OCI-LY7 (cell line): ENCODE measurements at regions of chr19 and their contacts with region 1.

Region 1: GRCh38 chr19:48492925-48493717 is 18.5 kb downstream of the LMTK3 start:
- DNase-seq: peak; percentile 98
- H3K4me3 ChIP-seq: peak overlapping the region; percentile 63
- H3K27ac ChIP-seq: peak overlapping the region; percentile 41
- H3K4me1 ChIP-seq: peaks cover 31% of the 10 kb centered on the region
- CTCF ChIP-seq: no peak

Region 2: DNA sequence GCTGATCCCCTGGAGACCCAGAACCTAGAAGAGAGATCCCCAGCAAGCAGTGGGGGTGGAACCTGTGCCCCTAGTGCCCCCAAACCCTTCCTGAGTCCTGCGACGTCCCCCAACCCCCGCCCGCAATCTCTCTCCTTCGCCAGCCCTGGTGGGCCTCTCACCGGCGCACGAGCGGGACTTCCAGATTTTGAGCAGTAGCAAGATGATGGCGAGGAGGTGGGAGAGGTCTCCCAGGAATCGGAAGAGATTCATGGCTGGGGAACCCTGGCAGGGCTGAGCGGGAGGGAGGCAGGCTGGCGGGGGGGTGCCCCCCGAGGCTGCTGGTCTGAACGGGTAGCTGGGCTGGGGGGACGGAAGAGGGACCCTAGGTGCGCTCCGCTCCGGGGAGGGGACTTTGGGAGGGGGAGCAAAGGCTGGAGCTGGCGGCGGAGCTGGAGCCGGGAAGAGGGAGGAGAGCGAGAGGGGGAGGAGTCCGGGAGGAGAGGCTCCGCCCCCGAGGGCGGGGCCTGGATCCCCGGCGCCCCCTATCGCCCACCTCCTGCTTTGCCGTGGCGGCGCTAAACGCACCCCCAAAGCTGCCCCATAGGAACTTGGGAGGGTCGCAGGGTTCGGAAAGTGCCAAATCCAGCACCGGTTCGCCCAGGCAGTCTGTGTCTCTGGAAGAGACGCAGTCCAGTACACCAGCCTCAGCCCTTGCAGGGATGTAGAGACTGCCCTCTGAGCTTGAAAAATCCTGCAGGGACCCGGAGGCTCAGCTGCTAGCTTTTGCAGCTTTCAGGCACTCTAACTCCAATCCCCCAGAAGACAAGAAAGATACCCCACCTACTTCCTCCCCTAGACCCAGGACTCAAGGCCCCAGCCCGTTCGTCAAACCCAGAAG is 101.8 kb before region 1 on chr19 and contains the start of gene KDELR1:
- CTCF ChIA-PET with region 1: no interaction called
- POLR2A ChIA-PET with region 1: no interaction called
- intact Hi-C with region 1: loop called (anchors 2 kb)
- DNase-seq: peak; percentile 72
- H3K4me3 ChIP-seq: peak within 1 kb of the TSS; percentile 88
- H3K27ac ChIP-seq: peak within 1 kb of the TSS; percentile 56
- H3K4me1 ChIP-seq: peaks cover 15% of the 10 kb centered on the region
- CTCF ChIP-seq: peak; percentile 96
- total RNA-seq, gene KDELR1: 26.2 and 38.8 TPM in 2 replicates

Region 3: DNA sequence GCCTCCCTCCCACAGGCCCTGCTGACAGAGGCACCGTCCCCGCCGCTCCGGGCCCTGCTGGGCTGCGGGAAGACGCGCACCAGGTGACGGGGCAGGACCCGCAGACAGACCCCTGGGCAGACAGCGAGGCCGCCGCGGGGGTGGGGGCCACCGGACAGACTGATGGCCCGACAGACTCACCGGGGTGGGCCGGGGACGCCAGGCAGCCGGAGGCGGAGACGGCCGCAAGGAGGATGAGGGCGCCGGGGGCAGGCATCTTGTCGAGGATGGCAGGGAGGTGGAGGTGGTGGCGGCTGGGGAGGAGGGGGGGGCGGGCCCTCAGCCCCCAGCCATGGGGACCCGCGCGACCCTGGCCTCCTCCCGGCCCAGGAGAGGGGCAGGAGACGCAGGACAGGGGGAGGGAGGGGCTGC is 18.2 kb after region 1 on chr19:
- CTCF ChIA-PET with region 1: no interaction called
- POLR2A ChIA-PET with region 1: no interaction called
- intact Hi-C with region 1: no loop called
- DNase-seq: no peak
- H3K4me3 ChIP-seq: peak overlapping the region; percentile 79
- H3K27ac ChIP-seq: no peak overlapping the region
- H3K4me1 ChIP-seq: peaks cover 33% of the 10 kb centered on the region
- CTCF ChIP-seq: no peak

Region 4: DNA sequence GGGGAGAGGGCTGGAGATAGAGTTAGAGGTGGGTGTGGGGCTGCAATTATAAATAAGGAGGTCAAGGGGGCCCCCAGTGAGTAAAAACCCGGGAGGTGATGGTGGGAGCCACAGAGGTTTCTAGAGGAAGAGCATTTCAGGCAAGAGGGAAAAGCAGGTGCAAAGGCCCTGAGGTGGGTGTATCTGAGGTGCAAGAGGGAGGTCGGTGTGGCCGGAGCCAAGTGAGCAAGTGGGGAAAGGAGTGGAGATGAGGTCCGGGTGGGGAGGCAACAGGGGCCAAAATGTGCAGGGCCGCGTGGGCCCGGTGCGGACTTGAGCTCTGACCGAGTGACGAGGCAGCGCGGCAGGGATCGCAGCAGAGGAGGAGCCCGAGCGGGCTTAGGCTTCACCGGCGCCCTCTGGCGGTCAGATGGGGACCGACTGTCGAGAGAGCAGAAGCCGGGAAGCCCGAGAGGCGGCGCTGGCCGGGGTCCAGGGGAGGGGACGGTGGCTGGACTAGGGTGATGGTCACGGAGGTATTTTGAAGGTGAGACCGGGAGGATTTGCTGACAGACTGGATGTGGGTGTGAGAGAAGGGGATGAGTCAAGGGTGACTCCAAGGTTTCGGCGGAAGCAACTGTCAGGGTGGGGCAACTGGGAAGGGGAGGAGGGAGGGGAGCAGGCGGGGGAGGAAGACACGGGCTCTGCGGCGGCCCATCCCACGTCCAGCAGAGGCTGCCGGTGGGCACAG is 95.7 kb after region 1 on chr19:
- CTCF ChIA-PET with region 1: interaction called, 6 read pairs
- POLR2A ChIA-PET with region 1: no interaction called
- intact Hi-C with region 1: loop called (anchors 1 kb)
- DNase-seq: peak; percentile 87
- H3K4me3 ChIP-seq: peak overlapping the region; percentile 48
- H3K27ac ChIP-seq: no peak overlapping the region
- H3K4me1 ChIP-seq: peaks cover 4% of the 10 kb centered on the region
- CTCF ChIP-seq: peak; percentile 94